Naive thymus-derived CD4-positive, alpha-beta T cell (primary cell): ENCODE measurements at regions of chr2 and their contacts with region 1.

Region 1: DNA sequence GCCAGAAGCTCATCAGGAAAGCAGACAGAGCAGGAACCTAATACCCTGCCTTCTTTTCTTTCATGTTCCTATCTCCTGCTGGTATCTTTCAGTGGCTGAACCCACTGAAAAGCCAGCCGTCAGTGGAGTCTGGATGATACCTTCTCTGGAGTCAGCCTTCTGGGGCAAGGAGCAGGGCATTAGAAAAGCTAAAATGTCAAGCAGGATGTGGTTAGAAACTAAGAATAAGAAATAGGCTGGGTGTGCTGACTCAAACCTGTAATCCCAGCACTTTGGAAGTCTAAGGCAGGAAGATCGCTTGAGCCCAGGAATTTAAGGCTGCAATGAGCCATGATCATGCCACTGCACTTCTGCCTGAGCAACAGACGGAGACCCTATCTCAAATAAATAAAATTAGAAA is 642.0 kb upstream of the FSHR start:
- DNase-seq: no peak
- ATAC-seq: no peak
- H3K4me3 ChIP-seq: no peak overlapping the region
- H3K4me3 Mint-ChIP-seq: no peak overlapping the region
- H3K27ac ChIP-seq: no peak overlapping the region
- H3K27ac Mint-ChIP-seq: no peak overlapping the region
- H3K4me1 ChIP-seq: no peaks in the 10 kb centered on the region
- H3K4me1 Mint-ChIP-seq: no peaks in the 10 kb centered on the region
- H3K27me3 ChIP-seq: no peaks in the 10 kb centered on the region
- H3K27me3 Mint-ChIP-seq: no peaks in the 10 kb centered on the region

Region 2: DNA sequence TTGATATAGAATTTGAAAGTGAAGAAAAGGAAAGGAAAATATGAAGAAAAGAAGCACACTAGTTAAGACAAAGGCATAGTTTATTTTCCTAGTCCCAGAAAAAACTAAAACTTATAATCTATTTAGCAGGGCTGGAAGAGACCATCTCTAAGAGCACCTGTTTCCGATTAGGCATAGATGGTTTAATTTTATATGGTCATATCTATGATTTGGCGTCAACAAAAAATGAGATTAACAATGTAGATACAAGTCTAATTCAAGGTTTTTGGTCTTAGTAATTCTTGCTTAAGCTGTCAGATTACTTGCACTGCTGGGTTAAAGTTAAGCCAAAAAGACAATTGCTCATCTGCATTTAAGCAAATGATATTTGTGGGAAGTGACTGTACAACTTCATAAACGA is 139.4 kb before region 1 on chr2:
- CTCF ChIA-PET with region 1: no interaction called
- POLR2A ChIA-PET with region 1: no interaction called
- intact Hi-C with region 1: no loop called
- DNase-seq: no peak
- ATAC-seq: no peak
- H3K4me3 ChIP-seq: no peak overlapping the region
- H3K4me3 Mint-ChIP-seq: no peak overlapping the region
- H3K27ac ChIP-seq: no peak overlapping the region
- H3K27ac Mint-ChIP-seq: no peak overlapping the region
- H3K4me1 ChIP-seq: no peaks in the 10 kb centered on the region
- H3K4me1 Mint-ChIP-seq: no peaks in the 10 kb centered on the region
- H3K27me3 ChIP-seq: no peaks in the 10 kb centered on the region
- H3K27me3 Mint-ChIP-seq: peaks cover 0 to 6% (median 0%) of the 10 kb centered on the region in 5 donors

Region 3: GRCh38 chr2:50763776-50764175 is 967.5 kb after region 1 on chr2:
- CTCF ChIA-PET with region 1: no interaction called
- POLR2A ChIA-PET with region 1: no interaction called
- intact Hi-C with region 1: loop called in 1 of 2 experiments (anchors 5 kb)
- DNase-seq: no peak
- ATAC-seq: no peak
- H3K4me3 ChIP-seq: no peak overlapping the region
- H3K4me3 Mint-ChIP-seq: no peak overlapping the region
- H3K27ac ChIP-seq: no peak overlapping the region
- H3K27ac Mint-ChIP-seq: no peak overlapping the region
- H3K4me1 ChIP-seq: no peaks in the 10 kb centered on the region
- H3K4me1 Mint-ChIP-seq: no peaks in the 10 kb centered on the region
- H3K27me3 ChIP-seq: no peaks in the 10 kb centered on the region
- H3K27me3 Mint-ChIP-seq: no peaks in the 10 kb centered on the region